ENCODE measurements at regions of chr22 and their contacts with region 1.

Region 1: GRCh38 chr22:25545672-25546071 is 18.8 kb upstream of the GRK3 start:
- DNase-seq: peak in 1 of 3 donors; percentile 13
- H3K4me3 ChIP-seq: peak overlapping the region in 1 of 7 experiments; percentile 21
- H3K27ac ChIP-seq: no peak overlapping the region
- H3K4me1 ChIP-seq: peaks cover 13 to 52% (median 31%) of the 10 kb centered on the region in 4 experiments
- H3K27me3 ChIP-seq: no peaks in the 10 kb centered on the region

Region 2: DNA sequence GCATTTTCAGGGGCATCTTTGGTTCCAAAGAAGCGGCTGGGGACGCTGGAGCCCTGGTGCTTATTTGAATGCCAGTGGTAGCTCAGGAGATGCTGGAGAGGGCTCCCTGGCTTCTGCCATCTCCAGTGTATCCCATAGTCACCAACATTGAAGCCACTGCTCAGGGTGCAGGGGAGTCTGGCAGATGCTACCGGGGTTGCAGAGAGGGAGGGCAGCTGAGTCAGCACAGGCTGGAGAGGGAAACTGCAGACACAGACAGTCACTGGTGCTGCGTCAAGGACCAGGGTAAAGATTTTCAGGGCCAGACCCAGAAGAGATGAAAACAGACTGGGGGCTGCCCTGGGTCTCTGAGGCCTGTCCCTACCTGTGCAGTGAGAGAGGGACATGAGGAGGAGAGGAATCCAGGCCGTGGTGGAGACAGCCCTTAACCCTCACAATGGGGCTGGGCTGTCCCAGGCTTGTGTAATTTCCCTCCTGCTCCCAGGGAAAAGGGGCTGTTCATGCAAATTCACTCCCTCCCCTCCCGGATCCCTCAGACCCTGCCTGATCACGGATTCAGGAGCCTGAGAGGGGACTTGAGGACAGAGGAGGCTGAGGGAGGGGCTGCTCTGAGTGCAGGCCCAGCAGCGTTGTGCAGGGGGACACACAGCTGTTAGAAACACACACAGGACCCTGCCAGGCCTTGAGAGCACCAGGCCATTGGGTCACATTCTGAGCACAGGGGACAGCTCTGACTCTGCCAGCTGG is 108.1 kb before region 1 on chr22:
- CTCF ChIA-PET with region 1: no interaction called
- POLR2A ChIA-PET with region 1: no interaction called
- DNase-seq: no peak
- H3K4me3 ChIP-seq: no peak overlapping the region
- H3K27ac ChIP-seq: no peak overlapping the region
- H3K4me1 ChIP-seq: no peaks in the 10 kb centered on the region
- H3K27me3 ChIP-seq: no peaks in the 10 kb centered on the region

Region 3: DNA sequence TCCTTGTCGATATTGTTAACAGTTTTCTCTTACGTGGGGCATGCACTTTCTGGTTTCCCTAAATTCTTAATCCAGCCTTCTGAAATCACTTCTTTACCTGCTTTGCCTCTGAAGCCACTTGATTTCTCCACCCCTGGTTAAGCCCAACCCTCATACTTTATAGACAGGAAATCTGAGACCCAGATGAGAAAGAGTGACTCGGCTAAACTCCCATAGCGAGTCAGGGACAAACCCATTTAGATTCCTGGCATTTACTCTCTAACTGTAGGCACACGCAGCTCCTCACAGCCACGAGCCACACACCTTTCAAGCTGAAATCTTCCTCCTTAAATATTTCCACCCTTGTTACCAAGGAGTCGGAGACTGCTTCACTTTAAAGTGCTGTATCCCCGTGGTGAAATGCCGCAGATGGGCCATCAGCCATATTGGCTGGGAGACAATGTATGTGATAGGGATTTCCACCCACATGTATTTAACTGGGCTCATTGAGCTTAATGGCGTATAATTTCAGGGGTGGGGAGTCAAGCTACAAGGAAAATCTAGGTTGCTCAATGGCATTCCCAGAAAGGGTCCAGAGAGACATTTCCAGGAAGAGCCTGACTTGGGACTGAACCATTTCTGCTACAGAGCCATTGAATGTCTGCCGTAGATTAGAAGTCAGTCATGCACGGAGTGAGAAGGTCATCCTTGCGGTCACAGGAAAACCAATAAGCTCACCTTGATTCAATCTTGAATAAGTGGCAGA is 31.1 kb before region 1 on chr22:
- CTCF ChIA-PET with region 1: no interaction called
- POLR2A ChIA-PET with region 1: no interaction called
- DNase-seq: peak in 2 of 3 donors; percentile 6 to 7
- H3K4me3 ChIP-seq: no peak overlapping the region
- H3K27ac ChIP-seq: no peak overlapping the region
- H3K4me1 ChIP-seq: no peaks in the 10 kb centered on the region
- H3K27me3 ChIP-seq: no peaks in the 10 kb centered on the region

Region 4: DNA sequence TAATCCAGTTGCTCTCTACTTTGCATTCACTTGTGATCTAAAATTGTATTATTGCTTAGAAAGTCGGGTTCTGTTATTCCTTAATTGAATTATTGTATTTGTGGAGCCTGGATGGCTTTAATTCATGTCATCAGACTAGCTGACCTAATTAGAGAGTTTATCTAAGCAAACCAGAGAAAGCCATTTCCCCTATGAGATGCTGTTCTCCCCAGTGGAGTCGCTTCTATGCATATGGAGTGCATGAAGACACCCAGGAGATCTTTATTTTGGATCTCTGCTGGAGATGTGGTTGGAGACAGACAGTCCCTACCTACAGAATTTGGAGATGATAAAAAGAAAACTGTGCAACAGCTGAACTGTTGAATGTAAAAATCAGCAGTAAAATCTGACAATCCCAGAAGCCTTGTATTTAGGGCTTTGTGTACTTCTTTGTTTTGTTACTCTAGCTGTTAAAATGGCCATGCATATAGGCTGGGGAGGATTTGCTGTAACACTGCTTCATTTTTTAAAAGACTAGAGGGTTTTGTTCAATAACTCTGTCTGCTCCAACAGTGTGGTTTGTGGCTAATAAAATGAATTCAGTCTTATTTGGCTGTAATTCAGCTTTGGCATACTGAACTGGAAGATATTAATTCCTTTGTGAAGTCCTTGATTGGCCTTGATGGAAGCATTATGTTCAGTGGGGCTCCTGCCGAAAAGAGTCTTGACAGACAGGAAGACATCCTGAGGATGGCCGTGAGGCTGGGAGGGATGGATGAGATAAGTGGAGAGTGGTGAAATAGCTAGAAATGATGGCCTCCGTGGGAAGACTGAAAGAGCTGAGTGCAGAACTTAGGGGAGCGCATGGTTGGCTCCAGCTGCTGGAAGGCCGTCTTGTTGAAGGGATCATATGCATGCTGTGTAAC is 151.3 kb after region 1 on chr22:
- CTCF ChIA-PET with region 1: interaction called, 22 read pairs
- POLR2A ChIA-PET with region 1: interaction called, 5 read pairs
- DNase-seq: no peak
- H3K4me3 ChIP-seq: no peak overlapping the region
- H3K27ac ChIP-seq: no peak overlapping the region
- H3K4me1 ChIP-seq: no peaks in the 10 kb centered on the region
- H3K27me3 ChIP-seq: no peaks in the 10 kb centered on the region

Region 5: GRCh38 chr22:25702040-25702439 is 156.4 kb after region 1 on chr22:
- CTCF ChIA-PET with region 1: interaction called, 22 read pairs
- POLR2A ChIA-PET with region 1: interaction called, 5 read pairs
- DNase-seq: peak; percentile 39 to 61 (median 59)
- H3K4me3 ChIP-seq: no peak overlapping the region
- H3K27ac ChIP-seq: no peak overlapping the region
- H3K4me1 ChIP-seq: no peaks in the 10 kb centered on the region
- H3K27me3 ChIP-seq: no peaks in the 10 kb centered on the region